ENCODE measurements at regions of chr4 and their contacts with region 1.

Region 1: DNA sequence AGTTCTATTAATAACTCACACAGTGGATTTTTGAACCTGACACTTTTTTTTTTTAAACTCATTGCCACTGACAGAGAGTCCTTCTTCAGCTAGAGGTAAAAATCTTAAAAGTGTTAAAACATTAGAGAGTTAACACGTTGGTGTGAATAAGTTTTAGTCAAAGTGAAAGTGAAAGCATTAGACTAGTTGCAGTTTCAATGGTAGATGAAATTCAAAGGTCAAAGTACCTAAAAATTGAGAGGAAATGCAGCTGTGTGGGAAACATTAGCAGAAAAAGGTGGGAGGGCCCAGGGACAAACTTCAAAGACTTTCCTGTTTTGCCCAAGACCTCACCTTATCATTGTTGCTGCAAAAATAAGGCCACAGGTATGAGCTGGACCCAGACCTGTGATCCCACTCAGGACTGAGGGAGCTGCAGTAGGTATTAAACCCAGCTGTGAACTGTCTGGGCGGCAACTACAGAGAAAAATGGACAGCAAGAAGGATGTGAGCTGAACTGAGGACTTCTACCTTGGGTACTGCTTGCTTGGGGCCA is 17.6 kb upstream of the GABRA4 start:
- DNase-seq: no peak
- ATAC-seq: no peak

Region 2: GRCh38 chr4:48396043-48396442 is 1385.1 kb after region 1 on chr4:
- intact Hi-C with region 1: loop called (anchors 10 kb)
- DNase-seq: no peak
- ATAC-seq: no peak

Measured in sciatic nerve (tissue), 2 donors.